HCT116 (cell line): ENCODE measurements at regions of chr2 and their contacts with region 1.

Region 1: GRCh38 chr2:24971536-24972314 is at the start of gene DNAJC27:
- DNase-seq: peak; percentile 94
- ATAC-seq: peak; percentile 93
- H3K4me3 ChIP-seq: peak within 1 kb of the TSS; percentile 77 to 81
- H3K27ac ChIP-seq: peak within 1 kb of the TSS; percentile 85
- H3K4me1 ChIP-seq: peaks cover 5 to 11% of the 10 kb centered on the region in 2 experiments
- H3K27me3 ChIP-seq: no peaks in the 10 kb centered on the region
- CTCF ChIP-seq: no peak
- POLR2A ChIP-seq: peak; percentile 73
- RAD21 ChIP-seq: no peak
- total RNA-seq, gene DNAJC27: 4.6 TPM

Region 2: DNA sequence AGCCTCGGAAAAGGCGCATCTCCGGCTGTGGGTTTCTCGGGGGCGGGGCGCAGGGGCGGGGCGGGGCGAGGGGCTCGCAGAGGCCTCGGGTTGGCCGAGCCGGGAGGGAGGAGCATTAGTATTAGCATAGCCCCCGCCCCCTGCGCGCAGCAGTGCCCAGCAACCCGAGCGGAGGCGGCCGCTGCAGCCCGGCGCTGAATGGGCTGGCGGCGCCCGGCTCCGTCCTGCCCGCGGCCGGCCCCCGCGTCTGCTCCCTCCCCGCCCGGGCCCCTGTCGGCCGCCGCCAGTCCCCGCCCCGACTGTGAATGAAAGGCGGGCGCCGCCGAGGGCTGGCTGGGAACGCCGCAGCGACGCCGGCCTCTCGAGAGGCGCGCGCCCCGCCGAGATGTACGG is 70.2 kb after region 1 on chr2 and contains the start of gene EFR3B:
- CTCF ChIA-PET with region 1: interaction called, 15 read pairs
- POLR2A ChIA-PET with region 1: no interaction called
- RAD21 ChIA-PET with region 1: no interaction called
- intact Hi-C with region 1: no loop called
- DNase-seq: peak; percentile 68
- ATAC-seq: peak; percentile 98
- H3K4me3 ChIP-seq: peak within 1 kb of the TSS; percentile 50 to 68
- H3K27ac ChIP-seq: peak within 1 kb of the TSS; percentile 43; the same call in 1 of the 2 replicates
- H3K4me1 ChIP-seq: peaks cover 21 to 26% of the 10 kb centered on the region in 2 experiments
- H3K27me3 ChIP-seq: peaks cover 29% of the 10 kb centered on the region; the same call in 1 of the 2 replicates
- CTCF ChIP-seq: no peak
- POLR2A ChIP-seq: no peak
- RAD21 ChIP-seq: no peak
- total RNA-seq, gene EFR3B: 0.96 TPM

Region 3: GRCh38 chr2:25125976-25126375 is 154.3 kb after region 1 on chr2:
- CTCF ChIA-PET with region 1: interaction called, 180 read pairs
- POLR2A ChIA-PET with region 1: interaction called, 31 read pairs
- RAD21 ChIA-PET with region 1: interaction called, 20 to 44 read pairs
- intact Hi-C with region 1: loop called (anchors 1 kb)
- DNase-seq: no peak
- ATAC-seq: no peak
- H3K4me3 ChIP-seq: no peak overlapping the region
- H3K27ac ChIP-seq: no peak overlapping the region
- H3K4me1 ChIP-seq: peaks cover 0 to 3% of the 10 kb centered on the region in 2 experiments; a peak in 1 of 4 replicates
- H3K27me3 ChIP-seq: no peaks in the 10 kb centered on the region
- CTCF ChIP-seq: no peak
- POLR2A ChIP-seq: no peak
- RAD21 ChIP-seq: no peak

Region 4: GRCh38 chr2:25131567-25132298 is 160.0 kb after region 1 on chr2:
- CTCF ChIA-PET with region 1: interaction called, 180 read pairs
- POLR2A ChIA-PET with region 1: interaction called, 31 read pairs
- RAD21 ChIA-PET with region 1: interaction called, 20 to 44 read pairs
- intact Hi-C with region 1: loop called (anchors 1 kb)
- DNase-seq: no peak
- ATAC-seq: no peak
- H3K4me3 ChIP-seq: no peak overlapping the region
- H3K27ac ChIP-seq: no peak overlapping the region
- H3K4me1 ChIP-seq: peaks cover 0 to 3% of the 10 kb centered on the region in 2 experiments; a peak in 1 of 4 replicates
- H3K27me3 ChIP-seq: 0 out of 2 replicates have a peak, but pooled peaks cover 4% of the 10 kb centered on the region
- CTCF ChIP-seq: no peak
- POLR2A ChIP-seq: no peak
- RAD21 ChIP-seq: no peak

Region 5: GRCh38 chr2:25201265-25201664 is 229.5 kb after region 1 on chr2:
- CTCF ChIA-PET with region 1: interaction called, 24 read pairs
- POLR2A ChIA-PET with region 1: no interaction called
- RAD21 ChIA-PET with region 1: no interaction called
- intact Hi-C with region 1: loop called (anchors 1 kb)
- DNase-seq: peak; percentile 16
- ATAC-seq: peak; percentile 85
- H3K4me3 ChIP-seq: no peak overlapping the region
- H3K27ac ChIP-seq: no peak overlapping the region
- H3K4me1 ChIP-seq: 0 out of 4 replicates have a peak, but pooled peaks cover 0 to 4% of the 10 kb centered on the region in 2 experiments
- H3K27me3 ChIP-seq: no peaks in the 10 kb centered on the region
- CTCF ChIP-seq: peak in 2 of 3 experiments; percentile 46 to 54; a peak in 4 of 6 replicates
- POLR2A ChIP-seq: no peak
- RAD21 ChIP-seq: no peak

Region 6: DNA sequence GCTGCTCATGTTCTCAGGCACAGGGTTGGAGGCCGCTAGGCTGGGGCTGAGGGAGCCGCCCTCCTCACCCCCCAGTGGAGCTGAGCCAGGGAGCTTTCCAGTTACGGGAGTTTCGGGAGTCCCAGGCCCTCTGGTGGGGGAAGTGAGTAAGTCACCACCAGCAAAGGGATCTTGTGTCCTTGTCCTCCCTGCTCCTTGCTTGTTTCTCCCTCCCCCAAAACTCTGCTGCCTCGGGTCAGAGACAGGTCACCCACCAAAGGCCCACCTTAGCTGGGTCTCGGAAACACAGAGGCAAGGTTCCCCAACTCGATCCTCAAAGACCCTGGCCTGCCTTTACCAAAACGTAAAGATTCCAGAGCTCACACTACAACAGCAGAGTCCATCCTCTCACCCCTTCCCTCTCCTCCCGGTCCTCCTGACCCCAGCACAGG is 257.1 kb after region 1 on chr2:
- CTCF ChIA-PET with region 1: interaction called, 16 read pairs
- POLR2A ChIA-PET with region 1: no interaction called
- RAD21 ChIA-PET with region 1: interaction called in 1 of 2 experiments, 3 read pairs
- intact Hi-C with region 1: no loop called
- DNase-seq: peak; percentile 59
- ATAC-seq: peak; percentile 97
- H3K4me3 ChIP-seq: no peak overlapping the region
- H3K27ac ChIP-seq: no peak overlapping the region
- H3K4me1 ChIP-seq: peaks cover 0 to 8% of the 10 kb centered on the region in 2 experiments; a peak in 3 of 4 replicates
- H3K27me3 ChIP-seq: no peaks in the 10 kb centered on the region
- CTCF ChIP-seq: peak; percentile 59 to 84 (median 72)
- POLR2A ChIP-seq: no peak
- RAD21 ChIP-seq: peak; percentile 54